ENCODE measurements at regions of chr5 and their contacts with region 1.

Region 1: GRCh38 chr5:55159763-55160492 is at the start of gene GPX8:
- DNase-seq: peak; percentile 58
- H3K4me3 Mint-ChIP-seq: no peak within 1 kb of the TSS
- H3K27ac Mint-ChIP-seq: no peak within 1 kb of the TSS
- H3K4me1 Mint-ChIP-seq: peaks cover 8% of the 10 kb centered on the region
- H3K27me3 Mint-ChIP-seq: peaks cover 69% of the 10 kb centered on the region
- total RNA-seq, gene GPX8: not detected

Region 2: DNA sequence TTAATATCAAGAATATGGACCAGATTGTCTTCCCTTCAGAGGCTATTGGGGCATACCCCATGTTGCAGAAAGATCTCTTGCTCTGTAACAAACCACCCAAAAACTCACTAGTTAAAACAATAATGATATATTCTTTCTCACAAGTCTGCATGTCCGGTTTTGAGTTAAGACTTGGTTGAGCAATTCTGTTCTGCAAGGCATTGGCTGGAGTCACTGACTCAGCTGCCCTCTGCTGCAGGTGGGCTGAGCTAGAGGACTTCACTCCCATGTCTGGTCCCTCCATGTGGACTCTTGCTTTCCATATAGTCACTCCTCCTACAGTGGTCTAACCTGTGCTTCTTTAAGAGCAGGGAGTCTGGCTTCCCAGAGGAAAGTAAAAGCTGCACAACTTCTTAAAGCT is 247.9 kb before region 1 on chr5:
- CTCF ChIA-PET with region 1: interaction called, 23 read pairs
- POLR2A ChIA-PET with region 1: no interaction called
- DNase-seq: no peak
- H3K4me3 Mint-ChIP-seq: no peak overlapping the region
- H3K27ac Mint-ChIP-seq: no peak overlapping the region
- H3K4me1 Mint-ChIP-seq: peaks cover 12% of the 10 kb centered on the region
- H3K27me3 Mint-ChIP-seq: peaks cover 56% of the 10 kb centered on the region

Region 3: DNA sequence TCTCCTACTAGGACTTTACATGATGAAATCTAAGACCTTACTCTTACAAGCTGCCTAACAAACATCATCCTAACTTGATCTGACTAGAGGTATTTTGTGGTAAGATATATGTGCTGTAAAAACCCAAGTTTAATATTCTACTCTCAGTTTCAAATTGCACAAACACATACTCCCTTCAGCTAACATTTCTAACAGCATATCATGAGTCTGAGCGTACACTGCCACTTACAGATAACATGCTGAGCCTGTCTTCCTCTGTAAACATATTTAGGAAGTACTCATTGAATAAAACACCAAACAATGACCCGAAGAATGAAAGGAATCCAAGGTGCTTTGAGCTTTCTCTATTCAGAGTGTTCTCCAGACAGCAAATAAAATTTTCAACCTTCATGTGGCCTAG is 166.6 kb before region 1 on chr5:
- CTCF ChIA-PET with region 1: no interaction called
- POLR2A ChIA-PET with region 1: no interaction called
- DNase-seq: no peak
- H3K4me3 Mint-ChIP-seq: no peak overlapping the region
- H3K27ac Mint-ChIP-seq: no peak overlapping the region
- H3K4me1 Mint-ChIP-seq: peaks cover 33% of the 10 kb centered on the region
- H3K27me3 Mint-ChIP-seq: peaks cover 2% of the 10 kb centered on the region

Region 4: DNA sequence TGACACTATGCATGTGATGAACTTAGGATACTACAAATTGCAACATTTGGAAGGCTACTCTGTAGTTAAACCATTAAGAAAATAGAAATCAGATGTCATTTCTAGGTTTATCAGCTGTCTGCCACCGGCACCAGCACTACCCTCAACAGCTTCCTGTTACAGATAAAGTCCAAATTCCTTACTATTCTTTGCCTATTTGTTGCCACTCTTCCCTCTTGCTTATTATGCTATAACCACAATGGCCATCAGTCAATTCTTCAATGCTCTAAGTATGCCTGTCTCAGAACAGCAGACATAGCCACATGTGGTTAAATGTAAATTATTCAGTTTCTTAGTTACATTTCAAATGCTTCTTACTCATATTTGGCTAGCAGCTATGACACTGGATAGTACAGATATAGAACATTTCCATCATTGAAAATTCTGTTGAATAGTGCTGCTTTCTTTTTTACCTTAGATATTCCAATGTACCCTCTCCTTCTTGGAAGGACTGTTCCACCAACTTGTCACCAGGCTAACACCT is 126.5 kb after region 1 on chr5:
- CTCF ChIA-PET with region 1: no interaction called
- POLR2A ChIA-PET with region 1: no interaction called
- DNase-seq: no peak
- H3K4me3 Mint-ChIP-seq: no peak overlapping the region
- H3K27ac Mint-ChIP-seq: no peak overlapping the region
- H3K4me1 Mint-ChIP-seq: no peaks in the 10 kb centered on the region
- H3K27me3 Mint-ChIP-seq: no peaks in the 10 kb centered on the region

Measured in activated CD4-positive, alpha-beta T cell treated with anti-CD3 and anti-CD28 coated beads, Interleukin-2, amount 10 ng/mL, durations not matched to agents 7 days and 5 days (primary cell).